Mammary epithelial cell (primary cell): ENCODE measurements at regions of chr17 and their contacts with region 1.

Region 1: GRCh38 chr17:7915611-7916382 is at the start of gene RNF227:
- DNase-seq: peak; percentile 94
- H3K4me3 ChIP-seq: peak within 1 kb of the TSS; percentile 48 to 76 (median 57)
- H3K27ac ChIP-seq: peak within 1 kb of the TSS; percentile 72
- H3K4me1 ChIP-seq: peaks cover 28% of the 10 kb centered on the region
- H3K27me3 ChIP-seq: no peaks in the 10 kb centered on the region
- CTCF ChIP-seq: no peak
- total RNA-seq, gene RNF227: 5.2 to 6.4 TPM

Region 2: GRCh38 chr17:7704601-7705268 is 211.1 kb before region 1 on chr17 and contains the start of gene EFNB3:
- CTCF ChIA-PET with region 1: no interaction called
- dilution Hi-C with region 1: no loop called
- in situ Hi-C with region 1: no loop called
- intact Hi-C with region 1: no loop called
- DNase-seq: peak; percentile 38
- H3K4me3 ChIP-seq: peak within 1 kb of the TSS; percentile 49 to 64 (median 57)
- H3K27ac ChIP-seq: no peak within 1 kb of the TSS
- H3K4me1 ChIP-seq: peaks cover 12% of the 10 kb centered on the region
- H3K27me3 ChIP-seq: no peaks in the 10 kb centered on the region
- CTCF ChIP-seq: no peak
- total RNA-seq, gene EFNB3: 1.0 to 9.2 TPM

Region 3: DNA sequence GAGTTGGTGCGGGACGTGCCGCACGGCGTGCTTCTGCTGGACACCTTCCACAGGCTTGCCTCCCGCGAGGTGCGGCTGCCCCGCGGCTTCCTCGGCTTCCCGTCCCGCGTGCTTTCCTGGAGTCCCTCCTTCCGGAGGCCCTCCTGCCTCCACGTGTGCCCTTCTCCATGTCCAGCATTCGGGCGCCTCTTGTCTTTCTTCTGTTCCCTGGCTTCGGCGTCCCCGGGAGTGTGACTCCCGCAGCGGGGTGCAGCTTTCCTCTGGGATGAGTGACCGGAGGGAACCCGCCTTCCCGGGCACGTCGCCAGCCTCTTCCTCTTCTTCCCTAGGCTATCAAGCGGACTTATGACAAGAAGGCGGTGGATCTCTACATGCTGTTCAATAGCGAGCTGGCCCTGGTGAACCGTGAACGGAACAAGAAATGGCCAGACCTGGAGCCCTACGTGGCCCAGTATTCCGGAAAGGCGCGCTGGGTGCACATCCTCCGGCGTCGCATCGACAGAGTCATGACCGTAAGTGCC is 175.3 kb before region 1 on chr17:
- CTCF ChIA-PET with region 1: no interaction called
- dilution Hi-C with region 1: no loop called
- in situ Hi-C with region 1: no loop called
- intact Hi-C with region 1: loop called (anchors 5 kb)
- DNase-seq: no peak
- H3K4me3 ChIP-seq: no peak overlapping the region
- H3K27ac ChIP-seq: no peak overlapping the region
- H3K4me1 ChIP-seq: peaks cover under 1% of the 10 kb centered on the region
- H3K27me3 ChIP-seq: peaks cover 3% of the 10 kb centered on the region
- CTCF ChIP-seq: no peak

Region 4: DNA sequence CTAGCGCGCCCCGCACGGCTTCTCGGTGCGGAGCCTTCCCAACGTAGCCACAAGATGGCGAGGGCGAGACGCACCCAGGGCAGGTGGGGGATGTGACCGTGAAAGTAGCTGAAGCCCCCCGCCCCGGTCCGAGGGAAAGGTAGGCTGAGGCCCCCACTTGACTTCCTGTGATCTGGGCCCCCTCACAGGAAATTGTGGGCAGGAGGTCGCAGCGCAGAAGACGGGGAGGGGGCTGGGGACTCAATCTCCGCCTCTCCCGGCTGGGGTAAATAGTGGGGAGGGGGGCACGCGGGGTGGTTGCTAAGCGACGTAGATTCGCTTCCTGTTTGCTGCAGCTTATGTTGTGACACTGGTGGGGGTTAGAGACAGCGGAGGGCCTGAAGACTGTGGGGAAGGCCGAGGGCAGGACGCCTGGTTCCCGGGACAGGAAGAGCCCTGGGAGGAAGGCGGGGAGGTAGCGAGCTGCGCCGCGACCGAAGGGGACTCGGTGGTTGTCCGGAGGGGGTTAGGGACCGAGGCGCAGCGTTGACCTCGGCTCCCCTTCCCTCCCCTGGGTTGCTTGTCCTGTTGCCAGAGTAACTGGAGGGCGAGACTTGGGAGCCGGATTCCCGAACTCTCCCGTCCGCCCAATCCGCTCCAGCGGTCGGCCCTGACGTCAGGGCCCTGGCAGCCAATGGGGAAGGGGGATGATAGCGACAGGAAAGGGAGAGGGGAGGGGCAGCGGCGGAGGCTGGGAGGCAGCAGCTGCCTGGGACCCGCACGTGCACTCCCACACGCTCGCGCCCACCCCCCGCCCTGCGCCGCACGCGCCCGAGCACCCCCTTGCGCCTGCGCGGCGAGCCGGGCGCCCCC is 80.6 kb before region 1 on chr17:
- CTCF ChIA-PET with region 1: no interaction called
- dilution Hi-C with region 1: no loop called
- in situ Hi-C with region 1: no loop called
- intact Hi-C with region 1: loop called (anchors 2 kb)
- DNase-seq: peak; percentile 98
- H3K4me3 ChIP-seq: peak overlapping the region; percentile 69 to 94 (median 76)
- H3K27ac ChIP-seq: peak overlapping the region; percentile 97
- H3K4me1 ChIP-seq: peaks cover 43% of the 10 kb centered on the region
- H3K27me3 ChIP-seq: no peaks in the 10 kb centered on the region
- CTCF ChIP-seq: peak; percentile 52 to 90

Region 5: DNA sequence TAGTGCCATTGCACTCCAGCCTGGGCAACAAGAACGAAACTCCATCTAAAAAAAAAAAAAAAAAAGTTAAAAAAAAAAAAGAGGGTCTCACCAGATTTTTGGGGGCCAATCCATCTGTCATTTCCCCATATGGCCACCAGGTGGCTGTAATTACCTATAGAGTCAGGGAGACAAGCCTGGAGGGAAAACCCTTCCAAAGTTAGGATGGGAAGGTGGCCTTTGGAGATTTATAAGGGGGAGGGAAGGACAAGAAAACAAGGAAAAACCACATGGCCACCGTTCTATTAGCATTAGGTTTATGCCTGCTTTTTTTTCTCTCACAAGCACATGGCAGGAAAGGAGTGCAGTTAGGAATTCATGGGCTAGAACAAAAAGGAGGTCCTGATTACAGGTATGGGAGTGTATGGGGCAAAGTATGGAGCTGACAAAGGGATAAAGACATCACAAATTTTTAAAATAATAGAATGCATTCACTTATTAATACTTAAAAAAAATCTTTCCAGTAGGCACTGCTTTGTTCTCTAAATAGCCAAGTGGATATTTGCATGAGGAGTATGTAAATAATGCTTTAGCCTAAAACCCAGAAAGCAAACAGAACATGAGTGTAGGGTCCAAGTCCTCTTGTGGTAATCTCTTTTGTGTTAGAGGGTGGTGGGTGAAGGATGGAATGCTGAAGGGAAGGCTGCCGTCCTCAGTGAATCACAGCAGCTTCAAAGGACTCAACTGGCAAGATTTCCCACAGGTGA is 52.9 kb before region 1 on chr17:
- CTCF ChIA-PET with region 1: interaction called, 6 read pairs
- dilution Hi-C with region 1: no loop called
- in situ Hi-C with region 1: no loop called
- intact Hi-C with region 1: loop called (anchors 5 kb)
- DNase-seq: no peak
- H3K4me3 ChIP-seq: no peak overlapping the region
- H3K27ac ChIP-seq: no peak overlapping the region
- H3K4me1 ChIP-seq: peaks cover 13% of the 10 kb centered on the region
- H3K27me3 ChIP-seq: no peaks in the 10 kb centered on the region
- CTCF ChIP-seq: peak; percentile 62 to 70

Region 6: DNA sequence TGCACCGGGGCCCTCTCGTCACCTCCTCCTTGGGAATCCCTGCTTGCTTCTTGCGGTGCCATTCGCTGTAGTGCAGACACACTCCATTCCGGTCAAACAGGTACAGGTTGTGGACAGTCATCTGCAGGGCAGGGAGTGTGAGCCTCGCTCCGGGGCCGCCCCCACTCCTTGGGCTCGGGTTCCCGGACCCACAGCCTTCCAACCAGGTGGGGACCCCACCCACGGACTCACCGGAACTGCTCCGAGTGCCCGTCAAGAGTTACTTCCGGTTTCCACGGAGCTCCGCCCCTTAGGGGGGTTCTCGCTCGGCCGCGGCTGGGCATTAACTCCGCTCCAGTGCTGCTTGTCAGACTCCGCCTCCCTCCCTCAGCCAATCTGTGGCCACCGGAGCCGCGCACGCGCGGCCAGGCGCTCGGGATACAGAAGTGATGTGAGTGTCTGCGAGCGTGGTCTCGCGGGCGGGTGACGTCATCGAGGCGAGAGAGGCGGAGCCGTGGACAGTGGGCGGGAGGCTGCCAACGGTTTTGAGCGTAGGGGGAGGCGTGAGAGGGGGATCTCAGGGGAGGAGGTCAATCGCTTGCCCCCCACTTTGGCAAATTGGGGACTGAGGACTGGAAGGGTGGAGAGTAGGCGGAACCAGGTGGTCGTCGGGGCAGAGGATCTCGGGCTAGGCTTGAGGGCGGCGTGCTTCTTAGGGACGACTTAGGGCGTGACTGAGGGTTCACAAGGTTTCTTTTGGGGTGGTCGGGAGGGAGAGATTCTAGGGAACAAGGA is 16.1 kb after region 1 on chr17 and contains the starts of genes CNTROB and TRAPPC1:
- CTCF ChIA-PET with region 1: interaction called, 3 read pairs
- dilution Hi-C with region 1: no loop called
- in situ Hi-C with region 1: no loop called
- intact Hi-C with region 1: loop called (anchors 1 kb)
- DNase-seq: peak; percentile 99
- H3K4me3 ChIP-seq: peak within 1 kb of the TSS; percentile 70 to 94 (median 87)
- H3K27ac ChIP-seq: peak within 1 kb of the TSS; percentile 85
- H3K4me1 ChIP-seq: peaks cover 16% of the 10 kb centered on the region
- H3K27me3 ChIP-seq: no peaks in the 10 kb centered on the region
- CTCF ChIP-seq: no peak
- total RNA-seq, gene CNTROB: 20.3 to 38.4 TPM
- total RNA-seq, gene TRAPPC1: 43.3 to 174 TPM

Region 7: GRCh38 chr17:7989781-7990655 is 74.2 kb after region 1 on chr17:
- CTCF ChIA-PET with region 1: interaction called, 9 read pairs
- dilution Hi-C with region 1: no loop called
- in situ Hi-C with region 1: loop called (anchors 5 kb)
- intact Hi-C with region 1: loop called (anchors 1 kb)
- DNase-seq: peak; percentile 65
- H3K4me3 ChIP-seq: peak overlapping the region; percentile 55 to 76 (median 55)
- H3K27ac ChIP-seq: peak overlapping the region; percentile 26
- H3K4me1 ChIP-seq: peaks cover 21% of the 10 kb centered on the region
- H3K27me3 ChIP-seq: no peaks in the 10 kb centered on the region
- CTCF ChIP-seq: peak; percentile 85 to 96

Region 8: DNA sequence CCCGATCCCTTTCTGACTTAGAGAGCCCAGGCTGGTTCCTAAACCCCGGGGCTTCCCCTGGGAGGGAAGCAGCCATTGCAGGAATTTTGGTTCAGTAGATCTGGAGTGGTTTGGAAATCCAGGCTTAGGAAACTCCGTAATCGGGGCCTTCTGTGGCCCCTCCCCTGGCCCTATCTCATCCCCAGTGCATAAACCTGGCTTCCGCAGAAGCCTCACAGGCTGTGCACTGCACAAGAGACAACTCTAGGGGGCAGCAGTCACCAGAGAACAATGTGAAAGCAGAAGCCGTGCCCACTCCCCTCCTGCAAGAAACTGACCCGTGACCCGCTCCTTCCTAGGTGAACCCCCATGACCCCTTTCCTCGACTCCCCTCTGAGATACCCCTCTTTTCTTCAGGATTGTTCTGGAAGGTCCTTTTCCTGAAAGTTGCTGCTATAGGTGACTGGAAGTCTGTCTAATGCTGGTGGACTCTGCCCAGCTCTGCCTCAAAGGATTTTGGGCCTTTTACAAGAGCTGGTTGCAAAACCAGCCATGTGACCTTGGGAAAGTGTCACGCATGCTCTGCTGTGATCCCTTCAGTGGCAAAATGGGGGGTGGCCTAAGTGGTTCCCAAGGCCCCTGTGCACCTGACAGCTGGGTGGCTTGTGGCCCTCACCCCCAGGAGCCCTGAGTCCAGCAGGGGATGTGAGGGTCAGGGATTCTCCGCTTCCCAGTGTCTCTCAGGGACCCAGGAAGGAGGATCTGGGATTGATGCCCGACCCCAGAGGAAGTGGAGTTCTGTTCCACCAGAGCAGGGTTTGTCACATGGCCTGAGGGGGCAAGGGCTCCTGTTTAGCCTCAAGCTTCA is 101.1 kb after region 1 on chr17:
- CTCF ChIA-PET with region 1: no interaction called
- dilution Hi-C with region 1: no loop called
- in situ Hi-C with region 1: no loop called
- intact Hi-C with region 1: loop called (anchors 1 kb)
- DNase-seq: no peak
- H3K4me3 ChIP-seq: peak overlapping the region in 1 of 3 experiments; percentile 42
- H3K27ac ChIP-seq: no peak overlapping the region
- H3K4me1 ChIP-seq: peaks cover 48% of the 10 kb centered on the region
- H3K27me3 ChIP-seq: no peaks in the 10 kb centered on the region
- CTCF ChIP-seq: peak; percentile 80 to 83

Region 9: DNA sequence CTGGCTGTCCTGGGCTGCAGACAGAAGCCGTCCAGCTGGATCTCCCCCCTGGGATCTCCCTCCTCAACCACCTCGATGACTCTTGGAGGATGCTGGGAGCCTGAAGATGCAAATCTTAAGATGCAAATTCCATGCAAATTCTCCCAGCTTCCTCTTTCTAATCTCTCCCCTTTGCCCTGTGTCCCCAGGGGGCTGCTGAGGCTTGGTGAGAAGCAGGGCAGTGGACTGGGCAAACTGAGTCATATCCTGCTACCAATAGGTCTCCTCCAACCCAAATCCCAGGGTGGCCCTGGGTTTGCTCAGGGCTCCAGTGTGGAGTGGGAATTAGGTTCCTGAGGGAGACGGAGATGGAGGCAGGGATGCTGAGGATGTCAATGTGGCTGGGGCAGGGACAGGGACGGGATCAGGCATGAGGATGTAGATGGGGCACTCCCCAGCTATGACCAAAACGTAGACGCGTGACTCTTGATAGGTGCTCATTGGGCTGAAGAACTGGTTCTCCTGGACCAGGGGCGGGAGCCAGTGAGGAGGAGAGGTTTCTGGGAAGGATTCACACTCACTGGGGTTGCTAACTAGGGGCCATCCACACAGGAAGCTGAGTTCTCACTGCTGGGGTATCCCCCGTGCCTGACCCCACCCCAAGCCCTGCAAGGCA is 175.4 kb after region 1 on chr17:
- CTCF ChIA-PET with region 1: no interaction called
- dilution Hi-C with region 1: no loop called
- in situ Hi-C with region 1: no loop called
- intact Hi-C with region 1: no loop called
- DNase-seq: no peak
- H3K4me3 ChIP-seq: no peak overlapping the region
- H3K27ac ChIP-seq: no peak overlapping the region
- H3K4me1 ChIP-seq: peaks cover 8% of the 10 kb centered on the region
- H3K27me3 ChIP-seq: no peaks in the 10 kb centered on the region
- CTCF ChIP-seq: no peak